ENCODE measurements at regions of chr9 and their contacts with region 1.

Region 1: GRCh38 chr9:130693426-130694191 is at the start of gene EXOSC2:
- DNase-seq: peak; percentile 98 to 99
- ATAC-seq: peak; percentile 96
- H3K4me3 ChIP-seq: peak within 1 kb of the TSS; percentile 71 to 82 (median 74)
- H3K27ac ChIP-seq: peak within 1 kb of the TSS; percentile 69 to 76 (median 70)
- H3K4me1 ChIP-seq: peaks cover 10 to 23% of the 10 kb centered on the region in 2 donors
- H3K27me3 ChIP-seq: no peaks in the 10 kb centered on the region
- CTCF ChIP-seq: no peak
- POLR2A ChIP-seq: peak; percentile 33 to 61
- total RNA-seq, gene EXOSC2: 9.3 to 21.7 (median 12.0) TPM

Region 2: GRCh38 chr9:129835021-129835871 is 858.4 kb before region 1 on chr9 and contains the starts of genes C9orf78 and USP20:
- in situ Hi-C with region 1: no loop called
- intact Hi-C with region 1: loop called (anchors 5 kb)
- DNase-seq: peak; percentile 92 to 94
- ATAC-seq: peak; percentile 98 to 99
- H3K4me3 ChIP-seq: peak within 1 kb of the TSS; percentile 94 to 100 (median 98)
- H3K27ac ChIP-seq: peak within 1 kb of the TSS; percentile 78 to 95 (median 90)
- H3K4me1 ChIP-seq: peaks cover 24 to 28% of the 10 kb centered on the region in 2 donors
- H3K27me3 ChIP-seq: no peaks in the 10 kb centered on the region
- CTCF ChIP-seq: no peak
- POLR2A ChIP-seq: peak; percentile 91 to 97
- total RNA-seq, gene C9orf78: 82.3 to 108 (median 83.9) TPM
- total RNA-seq, gene USP20: 13.4 to 25.4 (median 18.6) TPM

Region 3: GRCh38 chr9:130461218-130461630 is 232.4 kb before region 1 on chr9:
- in situ Hi-C with region 1: loop called in 3 of 4 experiments (anchors 5 kb)
- intact Hi-C with region 1: no loop called
- DNase-seq: peak in 1 of 2 donors; percentile 35
- ATAC-seq: peak in 1 of 2 donors; percentile 30
- H3K4me3 ChIP-seq: no peak overlapping the region
- H3K27ac ChIP-seq: no peak overlapping the region
- H3K4me1 ChIP-seq: no peaks in the 10 kb centered on the region
- H3K27me3 ChIP-seq: no peaks in the 10 kb centered on the region
- CTCF ChIP-seq: peak; percentile 70 to 95 (median 94)
- POLR2A ChIP-seq: no peak

Region 4: DNA sequence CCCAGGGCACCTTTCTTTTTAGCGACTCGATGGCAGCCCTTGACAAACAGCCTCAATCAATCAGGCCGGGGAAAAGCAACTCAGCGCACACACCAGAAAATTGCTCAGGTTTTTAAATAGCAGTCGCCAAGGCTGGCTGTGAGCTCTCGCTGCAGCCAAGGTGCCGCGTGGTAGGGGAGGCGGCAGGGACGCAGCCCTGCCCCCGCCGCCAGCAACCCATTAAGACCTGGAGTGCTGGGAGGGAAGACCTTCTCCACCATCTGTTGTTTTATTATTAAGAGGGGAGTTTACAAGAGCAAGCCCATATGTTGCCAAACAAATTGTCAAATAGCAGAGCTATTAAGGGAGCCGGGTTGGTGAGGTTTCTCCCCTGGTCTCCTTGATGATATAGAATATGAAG is 226.2 kb before region 1 on chr9:
- in situ Hi-C with region 1: loop called in 1 of 4 experiments (anchors 5 kb)
- intact Hi-C with region 1: no loop called
- DNase-seq: no peak
- ATAC-seq: no peak
- H3K4me3 ChIP-seq: no peak overlapping the region
- H3K27ac ChIP-seq: no peak overlapping the region
- H3K4me1 ChIP-seq: no peaks in the 10 kb centered on the region
- H3K27me3 ChIP-seq: no peaks in the 10 kb centered on the region
- CTCF ChIP-seq: no peak
- POLR2A ChIP-seq: no peak

Region 5: GRCh38 chr9:130712564-130713285 is 19.1 kb after region 1 on chr9:
- in situ Hi-C with region 1: no loop called
- intact Hi-C with region 1: loop called (anchors 1 kb)
- DNase-seq: peak; percentile 98 to 99
- ATAC-seq: peak; percentile 99
- H3K4me3 ChIP-seq: peak overlapping the region; percentile 90
- H3K27ac ChIP-seq: peak overlapping the region; percentile 95 to 99 (median 98)
- H3K4me1 ChIP-seq: peaks cover 24 to 26% of the 10 kb centered on the region in 2 donors
- H3K27me3 ChIP-seq: no peaks in the 10 kb centered on the region
- CTCF ChIP-seq: peak in 1 of 5 experiments; percentile 25
- POLR2A ChIP-seq: peak; percentile 56 to 85

Region 6: GRCh38 chr9:130940693-130941576 is 247.3 kb after region 1 on chr9:
- in situ Hi-C with region 1: loop called in 1 of 4 experiments (anchors 10 kb)
- intact Hi-C with region 1: no loop called
- DNase-seq: peak; percentile 28 to 37
- ATAC-seq: peak; percentile 65 to 79
- H3K4me3 ChIP-seq: no peak overlapping the region
- H3K27ac ChIP-seq: no peak overlapping the region
- H3K4me1 ChIP-seq: peaks cover 0 to 7% of the 10 kb centered on the region in 2 donors
- H3K27me3 ChIP-seq: peaks cover 48 to 70% (median 67%) of the 10 kb centered on the region in 3 donors
- CTCF ChIP-seq: peak; percentile 59 to 85 (median 80)
- POLR2A ChIP-seq: no peak